Common myeloid progenitor, CD34-positive (primary cell): ENCODE measurements at regions of chr4 and their contacts with region 1.

Region 1: GRCh38 chr4:56544573-56545131 is 39.1 kb downstream of the ARL9 start:
- DNase-seq: peak; percentile 85 to 89 (median 88)
- H3K4me3 ChIP-seq: peak overlapping the region in 6 of 7 experiments; percentile 50 to 76 (median 64)
- H3K27ac ChIP-seq: no peak overlapping the region
- H3K4me1 ChIP-seq: peaks cover 0 to 8% (median 5%) of the 10 kb centered on the region in 4 experiments
- H3K27me3 ChIP-seq: no peaks in the 10 kb centered on the region

Region 2: GRCh38 chr4:56038487-56039148 is 506.0 kb before region 1 on chr4:
- CTCF ChIA-PET with region 1: no interaction called
- POLR2A ChIA-PET with region 1: no interaction called
- DNase-seq: no peak
- H3K4me3 ChIP-seq: no peak overlapping the region
- H3K27ac ChIP-seq: no peak overlapping the region
- H3K4me1 ChIP-seq: no peaks in the 10 kb centered on the region
- H3K27me3 ChIP-seq: no peaks in the 10 kb centered on the region

Region 3: GRCh38 chr4:56086073-56086521 is 458.6 kb before region 1 on chr4:
- CTCF ChIA-PET with region 1: no interaction called
- POLR2A ChIA-PET with region 1: no interaction called
- DNase-seq: peak in 2 of 3 donors; percentile 40 to 48
- H3K4me3 ChIP-seq: no peak overlapping the region
- H3K27ac ChIP-seq: no peak overlapping the region
- H3K4me1 ChIP-seq: peaks cover 3 to 19% (median 7%) of the 10 kb centered on the region in 4 experiments
- H3K27me3 ChIP-seq: no peaks in the 10 kb centered on the region

Region 4: GRCh38 chr4:56480691-56481090 is 64.0 kb before region 1 on chr4:
- CTCF ChIA-PET with region 1: no interaction called
- POLR2A ChIA-PET with region 1: no interaction called
- DNase-seq: no peak
- H3K4me3 ChIP-seq: no peak overlapping the region
- H3K27ac ChIP-seq: no peak overlapping the region
- H3K4me1 ChIP-seq: no peaks in the 10 kb centered on the region
- H3K27me3 ChIP-seq: no peaks in the 10 kb centered on the region

Region 5: DNA sequence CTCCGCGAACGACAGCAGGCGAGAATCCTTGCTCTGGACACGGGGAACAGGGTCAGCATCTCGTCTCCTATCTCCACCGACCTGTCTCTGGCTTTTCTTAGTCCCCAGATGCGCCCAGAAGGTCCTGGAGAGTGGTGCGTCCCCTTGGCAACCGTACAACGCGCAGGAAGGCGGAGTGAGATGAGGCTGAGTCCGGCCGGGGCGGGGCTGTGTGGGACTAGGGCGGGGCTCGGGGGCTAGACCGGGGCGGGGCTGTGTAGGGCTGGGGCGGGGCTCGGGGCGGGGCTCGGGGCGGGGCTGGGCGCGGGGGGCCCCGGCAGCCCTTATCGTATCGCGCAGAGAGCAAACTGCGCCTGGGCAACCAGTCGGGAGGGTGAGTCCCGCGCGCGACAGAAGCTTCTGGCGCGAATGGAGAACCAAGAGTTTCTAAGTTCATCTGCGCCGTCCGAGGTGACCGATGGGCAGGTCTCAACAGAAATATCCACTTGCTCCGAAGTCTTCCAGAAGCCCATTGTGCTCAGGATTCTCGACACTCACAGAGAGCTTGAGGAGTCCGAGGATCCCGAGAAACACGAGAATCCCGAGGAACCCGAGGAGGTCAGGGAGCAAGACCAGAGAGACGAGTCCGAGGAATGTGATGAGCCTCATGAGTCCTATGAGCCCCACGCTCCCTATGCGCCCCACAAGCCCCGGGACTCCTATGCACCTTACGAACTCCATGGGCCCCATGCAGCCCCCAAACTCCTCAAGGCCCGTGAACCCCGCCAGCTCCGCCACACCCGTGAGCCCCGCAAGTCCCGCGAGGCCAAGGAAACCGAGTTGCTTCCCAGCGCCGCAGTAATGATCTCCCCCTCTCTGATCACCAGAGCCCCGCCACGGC is 14.1 kb before region 1 on chr4:
- CTCF ChIA-PET with region 1: interaction called, 18 read pairs
- POLR2A ChIA-PET with region 1: no interaction called
- DNase-seq: peak; percentile 74 to 83 (median 82)
- H3K4me3 ChIP-seq: peak overlapping the region; percentile 55 to 87 (median 71)
- H3K27ac ChIP-seq: peak overlapping the region in 1 of 2 experiments; percentile 37
- H3K4me1 ChIP-seq: peaks cover 0 to 17% (median 12%) of the 10 kb centered on the region in 4 experiments
- H3K27me3 ChIP-seq: peaks cover 3 to 11% (median 6%) of the 10 kb centered on the region in 5 experiments